SK-N-SH (cell line): ENCODE measurements at regions of chr17 and their contacts with region 1.

Region 1: DNA sequence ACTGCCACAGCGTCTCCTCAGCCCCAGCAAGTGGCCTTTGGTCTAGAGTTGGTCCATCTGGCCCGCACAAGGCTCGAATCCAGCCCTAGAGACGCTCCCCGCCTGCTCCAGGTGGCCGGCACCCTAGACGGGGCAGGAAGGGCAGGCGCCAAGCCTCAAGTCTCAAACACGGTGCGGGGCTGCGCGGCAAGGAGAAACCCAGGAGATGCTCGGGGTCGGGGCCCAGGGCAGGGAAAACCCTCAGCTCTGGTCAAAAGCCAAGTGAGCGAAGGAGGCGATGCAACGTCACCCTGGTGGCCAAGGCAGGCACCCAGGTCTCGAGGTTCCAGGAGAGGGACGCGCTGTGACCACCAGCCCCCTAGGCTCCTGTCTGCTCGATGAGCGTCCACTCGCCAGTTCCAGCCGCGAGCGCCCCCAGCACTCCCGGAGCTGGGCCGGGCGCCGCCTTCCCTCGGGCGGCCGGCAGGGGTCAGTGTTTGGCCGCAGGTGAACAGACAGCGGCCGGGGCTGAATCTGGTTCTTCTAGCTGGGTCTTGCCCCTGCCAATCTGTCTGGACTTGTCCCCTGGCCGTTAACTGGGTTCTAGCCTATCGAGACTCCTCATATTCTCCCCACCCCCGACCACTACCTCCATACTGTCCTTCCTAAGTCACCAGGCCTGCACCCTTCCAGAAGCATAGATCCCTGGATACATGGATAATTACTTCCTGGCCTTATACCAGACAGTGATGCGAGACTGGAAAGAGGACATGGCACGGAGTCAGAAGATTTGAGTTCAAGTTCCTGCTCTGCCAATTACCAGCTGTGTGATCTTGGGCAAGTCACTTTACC is 44.0 kb downstream of the PRAC1 start:
- DNase-seq: peak; percentile 87
- H3K4me3 ChIP-seq: peak overlapping the region in 1 of 2 experiments; percentile 29; a peak in 1 of 4 replicates
- H3K27ac ChIP-seq: no peak overlapping the region
- H3K4me1 ChIP-seq: no peaks in the 10 kb centered on the region
- H3K27me3 ChIP-seq: peaks cover 96% of the 10 kb centered on the region
- CTCF ChIP-seq: peak; percentile 98
- EP300 ChIP-seq: no peak
- RAD21 ChIP-seq: peak; percentile 70

Region 2: DNA sequence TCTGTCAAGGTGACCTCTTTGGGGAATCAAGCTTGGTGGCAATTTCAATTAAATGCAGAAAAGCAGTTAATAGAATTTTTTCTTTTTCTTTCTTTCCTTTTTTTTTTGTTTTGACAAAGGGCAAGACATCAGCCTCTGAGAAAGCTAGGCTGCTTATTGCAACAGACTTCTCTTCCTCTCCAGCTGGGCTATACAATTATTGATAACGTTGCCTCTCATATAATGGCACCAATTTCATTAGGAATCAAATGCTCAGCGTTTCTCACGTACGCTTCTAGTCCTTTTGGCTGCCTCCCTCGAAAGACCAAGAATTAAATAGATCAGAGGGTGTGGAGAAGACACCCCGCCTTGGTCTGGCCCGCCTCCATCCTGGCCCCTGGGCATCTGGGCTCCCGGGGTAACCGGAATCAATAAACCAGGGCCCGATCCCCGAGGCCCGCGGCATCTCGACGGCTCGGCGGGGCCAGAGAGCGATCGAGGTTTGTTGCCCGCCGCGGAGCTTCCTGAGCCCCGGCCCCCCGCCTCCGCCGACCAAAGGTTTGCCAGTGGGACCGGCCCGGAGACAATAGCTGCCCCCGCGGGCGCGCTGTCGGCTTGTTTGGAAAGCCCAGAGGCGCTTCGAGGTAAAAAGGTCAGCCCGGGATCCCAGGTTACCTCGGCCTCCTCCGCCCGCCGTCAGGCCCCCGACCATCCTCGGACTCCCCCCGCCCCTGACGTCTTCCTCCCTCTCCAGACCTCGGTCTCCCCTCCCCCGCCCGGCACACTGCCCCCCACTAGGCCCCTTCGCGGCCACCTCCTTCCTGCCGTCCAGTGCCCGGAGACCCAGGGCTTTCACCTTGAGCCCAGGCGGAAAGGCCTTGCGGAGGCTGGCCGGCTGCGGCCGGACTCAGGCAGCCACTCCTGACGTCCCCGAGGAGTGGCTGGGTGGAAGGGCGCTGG is 151.5 kb before region 1 on chr17:
- CTCF ChIA-PET with region 1: no interaction called
- POLR2A ChIA-PET with region 1: no interaction called
- DNase-seq: peak; percentile 32
- H3K4me3 ChIP-seq: no peak overlapping the region
- H3K27ac ChIP-seq: no peak overlapping the region
- H3K4me1 ChIP-seq: no peaks in the 10 kb centered on the region
- H3K27me3 ChIP-seq: peaks cover 98% of the 10 kb centered on the region
- CTCF ChIP-seq: no peak
- EP300 ChIP-seq: no peak
- RAD21 ChIP-seq: no peak

Region 3: GRCh38 chr17:48647103-48647962 is 31.0 kb before region 1 on chr17:
- CTCF ChIA-PET with region 1: interaction called, 12 read pairs
- POLR2A ChIA-PET with region 1: no interaction called
- DNase-seq: peak; percentile 42
- H3K4me3 ChIP-seq: peak overlapping the region in 1 of 2 experiments; percentile 56; a peak in 2 of 4 replicates
- H3K27ac ChIP-seq: no peak overlapping the region
- H3K4me1 ChIP-seq: no peaks in the 10 kb centered on the region
- H3K27me3 ChIP-seq: peaks cover 84% of the 10 kb centered on the region
- CTCF ChIP-seq: no peak
- EP300 ChIP-seq: no peak
- RAD21 ChIP-seq: no peak

Region 4: DNA sequence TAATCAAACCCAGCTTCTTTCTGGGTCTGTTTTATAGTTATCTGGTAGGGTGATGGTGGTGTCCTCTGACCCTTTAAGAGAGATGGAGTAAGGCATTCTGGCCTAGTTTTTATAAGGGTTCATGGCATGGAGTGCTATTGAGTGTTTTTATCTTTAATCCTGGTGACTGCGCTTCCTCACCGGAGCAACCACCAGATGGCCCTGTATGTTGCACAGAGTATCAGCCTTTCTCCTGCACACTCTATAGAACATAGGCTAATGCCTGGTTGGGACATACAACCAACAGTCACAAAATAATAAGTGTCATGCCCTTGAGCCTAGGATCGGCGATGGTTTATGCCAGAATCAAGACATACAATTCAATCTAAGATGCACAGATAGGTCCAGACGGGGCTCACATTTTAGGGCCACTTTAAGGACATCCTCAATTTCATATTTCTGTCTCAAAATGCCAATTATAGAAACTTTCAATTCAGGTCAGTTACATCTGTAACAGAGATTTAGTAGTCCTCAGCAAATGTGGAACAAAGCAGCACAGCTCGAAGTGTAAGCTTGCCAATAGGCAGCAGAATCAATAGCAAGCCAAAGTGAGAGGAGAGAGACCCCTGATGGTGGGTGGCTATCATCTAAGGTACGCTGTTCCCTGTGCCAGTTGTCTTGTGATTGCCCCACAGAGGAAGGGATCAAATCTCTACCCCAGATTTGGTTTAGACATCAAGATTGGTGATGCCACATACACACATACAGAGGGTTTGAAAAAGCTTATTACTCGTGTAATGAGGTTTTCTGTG is 15.0 kb before region 1 on chr17:
- CTCF ChIA-PET with region 1: interaction called, 43 read pairs
- POLR2A ChIA-PET with region 1: no interaction called
- DNase-seq: no peak
- H3K4me3 ChIP-seq: no peak overlapping the region
- H3K27ac ChIP-seq: no peak overlapping the region
- H3K4me1 ChIP-seq: no peaks in the 10 kb centered on the region
- H3K27me3 ChIP-seq: peaks cover 88% of the 10 kb centered on the region
- CTCF ChIP-seq: peak; percentile 31; the same call in 1 of the 2 replicates
- EP300 ChIP-seq: no peak
- RAD21 ChIP-seq: no peak

Region 5: GRCh38 chr17:48704361-48705248 is 26.2 kb after region 1 on chr17:
- CTCF ChIA-PET with region 1: interaction called, 24 read pairs
- POLR2A ChIA-PET with region 1: no interaction called
- DNase-seq: no peak
- H3K4me3 ChIP-seq: no peak overlapping the region
- H3K27ac ChIP-seq: no peak overlapping the region
- H3K4me1 ChIP-seq: no peaks in the 10 kb centered on the region
- H3K27me3 ChIP-seq: peaks cover 99% of the 10 kb centered on the region
- CTCF ChIP-seq: no peak
- EP300 ChIP-seq: no peak
- RAD21 ChIP-seq: no peak

Region 6: GRCh38 chr17:48738803-48739526 is 60.6 kb after region 1 on chr17:
- CTCF ChIA-PET with region 1: interaction called, 10 read pairs
- POLR2A ChIA-PET with region 1: no interaction called
- DNase-seq: no peak
- H3K4me3 ChIP-seq: no peak overlapping the region
- H3K27ac ChIP-seq: no peak overlapping the region
- H3K4me1 ChIP-seq: no peaks in the 10 kb centered on the region
- H3K27me3 ChIP-seq: peaks cover 98% of the 10 kb centered on the region
- CTCF ChIP-seq: no peak
- EP300 ChIP-seq: no peak
- RAD21 ChIP-seq: no peak

Region 7: DNA sequence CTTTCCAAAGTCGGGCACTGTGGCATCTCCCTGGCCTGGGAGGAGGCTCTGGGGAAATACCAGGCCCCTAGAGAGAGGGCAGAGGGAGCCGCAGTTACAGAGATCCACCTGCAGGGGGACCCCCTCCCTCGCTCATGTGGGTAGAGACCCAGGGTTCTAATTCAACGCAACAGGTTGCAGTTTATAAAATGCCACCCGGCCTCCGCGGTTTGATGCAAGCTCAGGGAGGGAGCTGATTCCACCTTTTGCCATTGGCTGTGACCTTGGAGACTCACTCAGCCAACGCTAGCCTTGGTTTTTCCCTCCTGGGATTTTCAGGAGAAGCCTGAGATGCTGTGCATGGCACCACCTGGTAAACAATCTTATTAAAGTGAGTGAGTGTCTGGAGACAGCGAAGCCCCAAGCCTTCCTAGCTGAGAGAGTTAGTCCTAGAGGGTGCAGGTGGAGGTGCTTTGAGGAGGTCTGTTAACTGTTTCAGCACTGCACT is 126.6 kb after region 1 on chr17:
- CTCF ChIA-PET with region 1: interaction called, 21 read pairs
- POLR2A ChIA-PET with region 1: no interaction called
- DNase-seq: peak; percentile 88
- H3K4me3 ChIP-seq: peak overlapping the region in 1 of 2 experiments; percentile 15; a peak in 1 of 4 replicates
- H3K27ac ChIP-seq: no peak overlapping the region
- H3K4me1 ChIP-seq: peaks cover 0 to 18% of the 10 kb centered on the region in 2 experiments; a peak in 2 of 4 replicates
- H3K27me3 ChIP-seq: peaks cover 29% of the 10 kb centered on the region
- CTCF ChIP-seq: peak; percentile 99
- EP300 ChIP-seq: no peak
- RAD21 ChIP-seq: peak; percentile 95